CD8-positive, alpha-beta T cell (primary cell): ENCODE measurements at regions of chr9 and their contacts with region 1.

Region 1: GRCh38 chr9:94672811-94673487 is 33.6 kb upstream of the FBP1 start:
- DNase-seq: no peak
- ATAC-seq: no peak
- H3K4me3 ChIP-seq: no peak overlapping the region
- H3K4me3 Mint-ChIP-seq: no peak overlapping the region
- H3K27ac ChIP-seq: no peak overlapping the region
- H3K27ac Mint-ChIP-seq: no peak overlapping the region
- H3K4me1 ChIP-seq: no peaks in the 10 kb centered on the region
- H3K4me1 Mint-ChIP-seq: peaks cover 2% of the 10 kb centered on the region
- H3K27me3 ChIP-seq: no peaks in the 10 kb centered on the region
- H3K27me3 Mint-ChIP-seq: peaks cover 5% of the 10 kb centered on the region
- CTCF ChIP-seq: no peak

Region 2: GRCh38 chr9:94586814-94587213 is 86.1 kb before region 1 on chr9:
- CTCF ChIA-PET with region 1: no interaction called
- POLR2A ChIA-PET with region 1: no interaction called
- intact Hi-C with region 1: no loop called
- DNase-seq: no peak
- ATAC-seq: no peak
- H3K4me3 ChIP-seq: no peak overlapping the region
- H3K4me3 Mint-ChIP-seq: no peak overlapping the region
- H3K27ac ChIP-seq: no peak overlapping the region
- H3K27ac Mint-ChIP-seq: no peak overlapping the region
- H3K4me1 ChIP-seq: peaks cover 18% of the 10 kb centered on the region
- H3K4me1 Mint-ChIP-seq: peaks cover 19% of the 10 kb centered on the region
- H3K27me3 ChIP-seq: peaks cover 0 to 7% of the 10 kb centered on the region in 2 experiments
- H3K27me3 Mint-ChIP-seq: peaks cover 27% of the 10 kb centered on the region
- CTCF ChIP-seq: no peak

Region 3: GRCh38 chr9:94639061-94639998 is 33.6 kb before region 1 on chr9 and contains the start of gene FBP1:
- CTCF ChIA-PET with region 1: no interaction called
- POLR2A ChIA-PET with region 1: interaction called, 15 read pairs
- intact Hi-C with region 1: no loop called
- DNase-seq: peak in 8 of 9 experiments; percentile 30 to 62 (median 44)
- ATAC-seq: peak; percentile 75
- H3K4me3 ChIP-seq: peak within 1 kb of the TSS; percentile 65 to 79
- H3K4me3 Mint-ChIP-seq: peak within 1 kb of the TSS; percentile 94
- H3K27ac ChIP-seq: peak within 1 kb of the TSS in 1 of 2 experiments; percentile 30
- H3K27ac Mint-ChIP-seq: peak within 1 kb of the TSS; percentile 86
- H3K4me1 ChIP-seq: peaks cover 17% of the 10 kb centered on the region
- H3K4me1 Mint-ChIP-seq: peaks cover 16% of the 10 kb centered on the region
- H3K27me3 ChIP-seq: no peaks in the 10 kb centered on the region
- H3K27me3 Mint-ChIP-seq: peaks cover under 1% of the 10 kb centered on the region
- CTCF ChIP-seq: no peak
- total RNA-seq, gene FBP1: 2.2 to 2.7 TPM

Region 4: DNA sequence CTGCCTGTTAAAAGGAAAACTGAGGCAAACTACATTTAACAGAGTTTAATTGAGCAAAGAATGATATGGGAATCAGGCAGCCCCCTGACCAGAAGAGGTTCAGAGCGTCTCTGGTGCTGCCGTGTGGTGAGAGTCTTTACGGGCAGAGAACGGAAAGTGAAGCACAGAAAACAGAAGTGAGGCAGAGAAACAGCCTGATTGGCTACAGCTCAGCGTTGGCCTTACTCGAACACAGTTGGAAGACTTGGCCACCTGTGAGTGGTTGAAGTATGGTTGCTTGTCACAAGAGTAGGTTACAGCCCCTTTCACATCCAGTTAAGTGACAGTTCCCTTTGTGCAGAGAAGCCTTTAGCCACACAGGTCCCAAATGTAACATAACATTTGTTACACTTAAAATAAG is 16.7 kb before region 1 on chr9:
- CTCF ChIA-PET with region 1: interaction called, 25 read pairs
- POLR2A ChIA-PET with region 1: interaction called, 16 read pairs
- intact Hi-C with region 1: no loop called
- DNase-seq: peak in 7 of 9 experiments; percentile 11 to 69 (median 48)
- ATAC-seq: peak; percentile 96
- H3K4me3 ChIP-seq: peak overlapping the region; percentile 33 to 34
- H3K4me3 Mint-ChIP-seq: peak overlapping the region; percentile 80
- H3K27ac ChIP-seq: peak overlapping the region; percentile 17 to 49
- H3K27ac Mint-ChIP-seq: peak overlapping the region; percentile 78
- H3K4me1 ChIP-seq: peaks cover 13% of the 10 kb centered on the region
- H3K4me1 Mint-ChIP-seq: peaks cover 20% of the 10 kb centered on the region
- H3K27me3 ChIP-seq: no peaks in the 10 kb centered on the region
- H3K27me3 Mint-ChIP-seq: no peaks in the 10 kb centered on the region
- CTCF ChIP-seq: no peak

Region 5: DNA sequence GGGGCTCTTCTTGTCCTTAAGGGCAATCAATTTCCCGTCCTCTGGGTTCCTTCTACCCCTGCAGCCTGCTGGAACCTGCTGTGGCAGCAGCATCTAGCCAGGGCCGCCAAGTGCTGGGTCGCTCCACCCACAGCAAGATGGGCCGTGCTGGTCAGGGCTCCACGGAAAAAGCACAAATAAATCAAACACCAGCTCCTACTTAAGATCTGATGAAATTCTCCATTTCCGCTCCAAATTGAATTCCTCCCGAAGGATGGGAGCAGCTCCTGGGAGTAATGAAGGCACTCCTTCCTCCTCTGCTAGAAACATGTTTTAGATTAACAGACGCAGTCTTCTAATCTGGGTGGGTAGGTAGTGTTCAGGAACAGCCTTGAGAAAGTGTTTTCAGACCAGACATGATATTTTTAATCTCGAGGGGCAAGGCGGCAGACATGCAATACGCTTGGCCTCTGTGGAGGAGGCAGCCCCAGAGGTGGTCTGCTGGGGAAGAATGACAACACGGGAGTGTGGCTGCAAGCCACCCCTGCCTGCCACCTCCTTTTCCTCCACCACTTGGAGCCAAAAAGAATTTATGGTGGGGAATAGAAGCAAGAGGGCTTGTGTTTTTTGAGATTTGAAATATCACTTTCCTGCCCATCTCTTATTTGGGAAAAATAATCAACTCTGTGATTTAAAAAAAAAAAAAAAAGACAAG is 247.6 kb after region 1 on chr9:
- CTCF ChIA-PET with region 1: interaction called, 5 read pairs
- POLR2A ChIA-PET with region 1: no interaction called
- intact Hi-C with region 1: loop called in 1 of 2 experiments (anchors 5 kb)
- DNase-seq: no peak
- ATAC-seq: no peak
- H3K4me3 ChIP-seq: no peak overlapping the region
- H3K4me3 Mint-ChIP-seq: no peak overlapping the region
- H3K27ac ChIP-seq: no peak overlapping the region
- H3K27ac Mint-ChIP-seq: no peak overlapping the region
- H3K4me1 ChIP-seq: no peaks in the 10 kb centered on the region
- H3K4me1 Mint-ChIP-seq: peaks cover 3% of the 10 kb centered on the region
- H3K27me3 ChIP-seq: no peaks in the 10 kb centered on the region
- H3K27me3 Mint-ChIP-seq: no peaks in the 10 kb centered on the region
- CTCF ChIP-seq: no peak

Region 6: GRCh38 chr9:95127249-95128176 is 454.6 kb after region 1 on chr9:
- CTCF ChIA-PET with region 1: interaction called, 242 read pairs
- POLR2A ChIA-PET with region 1: interaction called, 3 read pairs
- intact Hi-C with region 1: loop called in 1 of 2 experiments (anchors 1 kb)
- DNase-seq: peak; percentile 42 to 80 (median 67)
- ATAC-seq: peak; percentile 68
- H3K4me3 ChIP-seq: no peak overlapping the region
- H3K4me3 Mint-ChIP-seq: no peak overlapping the region
- H3K27ac ChIP-seq: no peak overlapping the region
- H3K27ac Mint-ChIP-seq: no peak overlapping the region
- H3K4me1 ChIP-seq: no peaks in the 10 kb centered on the region
- H3K4me1 Mint-ChIP-seq: peaks cover 4% of the 10 kb centered on the region
- H3K27me3 ChIP-seq: no peaks in the 10 kb centered on the region
- H3K27me3 Mint-ChIP-seq: no peaks in the 10 kb centered on the region
- CTCF ChIP-seq: peak; percentile 78

Region 7: DNA sequence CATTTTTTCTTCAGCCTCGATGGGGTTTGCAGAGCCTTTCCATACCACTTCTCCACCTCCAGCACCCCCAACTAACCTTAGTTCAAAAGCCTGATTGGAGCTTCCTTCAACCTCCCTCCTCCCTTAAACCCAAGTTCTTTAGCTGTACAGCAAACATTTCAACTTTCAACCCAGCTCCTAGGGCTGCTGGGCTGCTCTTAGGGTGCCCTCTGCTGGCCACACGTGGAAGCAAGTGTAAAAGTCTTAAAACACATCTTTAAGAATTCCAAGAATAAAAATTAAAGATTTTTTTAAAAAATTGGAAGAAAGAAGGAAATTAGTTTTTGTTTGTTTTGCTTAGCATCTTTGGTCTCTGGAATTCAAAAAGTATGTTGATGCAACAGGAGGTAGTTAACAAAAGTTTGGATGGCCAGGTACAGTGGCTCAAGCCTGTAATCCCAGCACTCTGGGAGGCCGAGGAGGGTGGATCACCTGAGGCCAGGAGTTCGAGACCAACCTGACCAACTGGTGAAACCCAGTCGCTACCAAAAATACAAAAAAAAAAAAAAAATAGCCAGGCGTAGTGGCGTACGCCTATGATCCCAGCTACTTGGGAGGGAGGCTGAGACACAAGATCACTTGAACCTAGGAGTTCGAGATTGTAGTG is 1644.5 kb after region 1 on chr9:
- CTCF ChIA-PET with region 1: no interaction called
- POLR2A ChIA-PET with region 1: no interaction called
- intact Hi-C with region 1: loop called (anchors 5 kb)
- DNase-seq: peak in 7 of 9 experiments; percentile 13 to 73 (median 61)
- ATAC-seq: no peak
- H3K4me3 ChIP-seq: no peak overlapping the region
- H3K4me3 Mint-ChIP-seq: no peak overlapping the region
- H3K27ac ChIP-seq: no peak overlapping the region
- H3K27ac Mint-ChIP-seq: no peak overlapping the region
- H3K4me1 ChIP-seq: no peaks in the 10 kb centered on the region
- H3K4me1 Mint-ChIP-seq: no peaks in the 10 kb centered on the region
- H3K27me3 ChIP-seq: no peaks in the 10 kb centered on the region
- H3K27me3 Mint-ChIP-seq: no peaks in the 10 kb centered on the region
- CTCF ChIP-seq: peak; percentile 80